ENCODE measurements at regions of chr14 and their contacts with region 1.

Region 1: GRCh38 chr14:70972107-70972976 is 65.1 kb downstream of the PCNX1 start:
- DNase-seq: peak; percentile 73 to 81
- ATAC-seq: peak; percentile 84 to 97 (median 86)
- H3K4me3 ChIP-seq: no peak overlapping the region
- H3K27ac ChIP-seq: no peak overlapping the region
- H3K4me1 ChIP-seq: peaks cover 5% of the 10 kb centered on the region
- H3K27me3 ChIP-seq: no peaks in the 10 kb centered on the region
- CTCF ChIP-seq: peak; percentile 95

Region 2: DNA sequence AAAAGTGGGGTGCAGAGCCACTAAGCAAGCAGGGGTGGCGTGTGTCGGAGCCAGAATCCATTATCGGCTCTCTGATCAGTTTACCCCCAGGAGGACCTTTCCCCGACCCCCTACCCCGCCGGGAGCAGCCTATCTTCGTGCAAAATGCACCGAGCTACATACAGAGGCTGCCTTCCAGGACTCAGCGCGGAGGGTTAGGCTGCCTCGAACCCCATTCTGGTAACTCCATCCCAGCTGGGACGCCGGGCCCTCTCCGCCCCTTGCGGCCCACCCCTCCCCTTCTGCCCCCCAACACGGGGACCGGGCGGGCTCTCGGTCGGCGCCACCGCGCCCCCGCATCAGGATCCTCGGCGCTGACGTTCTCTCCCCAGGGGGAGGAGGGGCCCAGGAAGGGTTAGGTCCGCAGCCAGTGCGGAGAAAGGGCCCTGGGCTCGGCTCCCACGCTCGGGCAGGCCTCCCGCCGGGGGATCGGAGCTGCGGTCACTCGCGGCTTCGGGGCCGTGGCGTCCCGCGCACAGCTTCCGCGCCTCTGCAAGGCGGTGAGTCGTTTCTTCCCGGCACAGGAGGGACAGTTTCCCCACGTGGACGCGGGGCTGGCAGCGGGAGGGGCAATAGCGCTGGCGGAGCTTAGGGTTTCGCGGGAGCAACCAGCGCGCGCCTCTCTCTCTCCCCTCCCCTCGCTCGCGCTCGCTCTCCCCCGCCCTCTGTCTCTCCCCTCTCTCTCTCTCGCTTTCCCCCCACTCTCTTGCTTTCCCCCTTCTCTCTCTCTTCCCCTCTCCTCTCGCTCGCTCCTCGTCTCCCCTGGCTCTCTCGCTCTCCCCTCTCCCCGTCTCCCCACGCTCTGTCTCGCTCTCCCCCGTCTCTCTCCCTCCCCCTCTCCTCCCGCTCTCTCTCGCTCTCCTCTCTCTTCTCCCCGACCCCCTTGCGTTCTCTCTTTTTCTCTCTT is 150.5 kb before region 1 on chr14:
- intact Hi-C with region 1: loop called (anchors 1 to 10 kb)
- DNase-seq: peak; percentile 52 to 74
- ATAC-seq: peak; percentile 32 to 76 (median 60)
- H3K4me3 ChIP-seq: peak overlapping the region; percentile 69
- H3K27ac ChIP-seq: no peak overlapping the region
- H3K4me1 ChIP-seq: no peaks in the 10 kb centered on the region
- H3K27me3 ChIP-seq: peaks cover 0 to 30% (median 10%) of the 10 kb centered on the region in 3 donors
- CTCF ChIP-seq: no peak

Region 3: DNA sequence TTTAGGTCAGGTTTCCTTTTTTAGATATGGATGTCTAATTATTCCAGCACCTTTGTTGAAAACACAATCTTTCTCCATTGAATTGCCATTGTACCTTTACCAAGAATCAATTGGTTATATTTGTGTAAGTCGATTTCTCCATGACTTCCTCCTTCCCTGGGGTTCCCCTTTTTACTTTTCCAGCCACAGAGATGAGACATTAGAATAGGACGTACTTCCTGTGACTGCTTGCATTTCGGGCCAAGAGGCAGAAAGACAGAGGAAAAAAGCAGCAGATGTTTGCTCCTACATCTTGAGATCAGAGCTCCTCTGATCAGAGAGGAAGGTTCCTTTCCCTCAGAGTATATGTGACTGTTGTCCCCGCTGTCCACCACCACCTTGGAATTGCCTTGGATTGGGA is 506.2 kb after region 1 on chr14:
- intact Hi-C with region 1: no loop called
- DNase-seq: no peak
- ATAC-seq: no peak
- H3K4me3 ChIP-seq: no peak overlapping the region
- H3K27ac ChIP-seq: no peak overlapping the region
- H3K4me1 ChIP-seq: no peaks in the 10 kb centered on the region
- H3K27me3 ChIP-seq: no peaks in the 10 kb centered on the region
- CTCF ChIP-seq: no peak

Region 4: GRCh38 chr14:71711619-71712018 is 739.3 kb after region 1 on chr14:
- intact Hi-C with region 1: no loop called
- DNase-seq: no peak
- ATAC-seq: no peak
- H3K4me3 ChIP-seq: no peak overlapping the region
- H3K27ac ChIP-seq: no peak overlapping the region
- H3K4me1 ChIP-seq: no peaks in the 10 kb centered on the region
- H3K27me3 ChIP-seq: no peaks in the 10 kb centered on the region
- CTCF ChIP-seq: no peak

Measured in psoas muscle (tissue), 8 donors.